Endothelial cell of umbilical vein (primary cell): ENCODE measurements at regions of chr1 and their contacts with region 1.

Region 1: GRCh38 chr1:230797942-230798418 is 50.8 kb downstream of the CAPN9 start:
- DNase-seq: peak; percentile 50
- H3K4me3 ChIP-seq: no peak overlapping the region
- H3K27ac ChIP-seq: no peak overlapping the region
- H3K4me1 ChIP-seq: no peaks in the 10 kb centered on the region
- H3K27me3 ChIP-seq: no peaks in the 10 kb centered on the region
- CTCF ChIP-seq: peak; percentile 39 to 65
- POLR2A ChIP-seq: no peak

Region 2: DNA sequence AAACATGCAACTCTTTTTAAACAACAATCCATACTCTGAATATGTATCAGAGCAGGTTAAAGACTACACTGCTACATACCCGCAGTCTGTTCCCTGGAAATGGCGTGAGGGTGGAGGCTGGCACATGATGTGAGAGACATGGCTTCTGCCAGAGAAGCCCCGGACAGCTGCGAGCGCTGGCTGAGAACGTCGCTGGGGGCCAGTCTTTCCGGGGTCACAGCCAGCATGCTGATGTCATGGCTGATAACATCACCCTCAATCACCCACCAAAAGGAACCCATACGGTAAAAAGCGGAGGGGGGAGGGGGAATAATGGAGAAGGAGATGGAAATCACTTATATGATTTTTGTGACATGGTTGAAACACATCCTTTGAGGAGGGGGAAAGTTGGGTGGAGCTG is 41.2 kb after region 1 on chr1:
- CTCF ChIA-PET with region 1: no interaction called
- POLR2A ChIA-PET with region 1: no interaction called
- dilution Hi-C with region 1: no loop called
- intact Hi-C with region 1: no loop called
- DNase-seq: no peak
- H3K4me3 ChIP-seq: no peak overlapping the region
- H3K27ac ChIP-seq: no peak overlapping the region
- H3K4me1 ChIP-seq: no peaks in the 10 kb centered on the region
- H3K27me3 ChIP-seq: no peaks in the 10 kb centered on the region
- CTCF ChIP-seq: no peak
- POLR2A ChIP-seq: no peak

Region 3: GRCh38 chr1:230867903-230868735 is 70.1 kb after region 1 on chr1 and contains the start of gene C1orf198:
- CTCF ChIA-PET with region 1: interaction called, 7 read pairs
- POLR2A ChIA-PET with region 1: no interaction called
- dilution Hi-C with region 1: no loop called
- intact Hi-C with region 1: loop called (anchors 1 kb)
- DNase-seq: peak; percentile 60
- H3K4me3 ChIP-seq: peak within 1 kb of the TSS; percentile 70 to 93 (median 83)
- H3K27ac ChIP-seq: peak within 1 kb of the TSS; percentile 33
- H3K4me1 ChIP-seq: peaks cover 20% of the 10 kb centered on the region
- H3K27me3 ChIP-seq: no peaks in the 10 kb centered on the region
- CTCF ChIP-seq: no peak
- POLR2A ChIP-seq: peak; percentile 65
- total RNA-seq, gene C1orf198: 27.7 and 29.2 TPM in 2 replicates